Pancreas (tissue), 10 donors: ENCODE measurements at regions of chr11 and their contacts with region 1.

Region 1: GRCh38 chr11:79045800-79046304 is 395.0 kb downstream of the TENM4 start:
- DNase-seq: no peak
- ATAC-seq: peak; percentile 28 to 56 (median 36)
- H3K4me3 ChIP-seq: no peak overlapping the region
- H3K27ac ChIP-seq: no peak overlapping the region
- H3K4me1 ChIP-seq: no peaks in the 10 kb centered on the region
- H3K27me3 ChIP-seq: no peaks in the 10 kb centered on the region
- CTCF ChIP-seq: no peak

Region 2: GRCh38 chr11:78902771-78903507 is 142.9 kb before region 1 on chr11:
- intact Hi-C with region 1: no loop called
- DNase-seq: peak in 4 of 6 donors; percentile 17 to 71 (median 53)
- ATAC-seq: peak in 3 of 4 donors; percentile 57 to 64 (median 57)
- H3K4me3 ChIP-seq: peak overlapping the region in 1 of 4 donors; percentile 25
- H3K27ac ChIP-seq: no peak overlapping the region
- H3K4me1 ChIP-seq: no peaks in the 10 kb centered on the region
- H3K27me3 ChIP-seq: no peaks in the 10 kb centered on the region
- CTCF ChIP-seq: no peak

Region 3: DNA sequence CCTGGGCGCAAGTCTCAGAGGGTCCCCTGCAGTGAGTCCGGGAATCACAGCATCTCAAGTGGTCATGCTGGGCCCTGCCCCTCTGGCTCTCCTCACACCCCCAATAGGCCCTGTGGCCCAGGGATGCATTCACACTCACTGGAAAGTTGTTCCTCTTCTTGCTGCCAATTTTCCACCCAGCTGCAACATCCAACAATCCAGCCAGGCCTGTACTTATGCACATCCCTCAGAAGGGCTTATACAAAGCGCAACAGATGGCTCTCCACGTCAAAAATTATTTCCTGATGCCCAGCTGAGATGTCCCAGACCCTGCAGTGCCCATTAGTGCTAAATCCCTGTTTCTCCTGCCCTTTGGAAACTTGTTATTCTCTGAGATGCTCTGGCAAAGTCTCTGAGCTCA is 63.4 kb before region 1 on chr11:
- intact Hi-C with region 1: loop called in 1 of 3 experiments (anchors 10 kb)
- DNase-seq: no peak
- ATAC-seq: no peak
- H3K4me3 ChIP-seq: no peak overlapping the region
- H3K27ac ChIP-seq: no peak overlapping the region
- H3K4me1 ChIP-seq: no peaks in the 10 kb centered on the region
- H3K27me3 ChIP-seq: no peaks in the 10 kb centered on the region
- CTCF ChIP-seq: no peak